OCI-LY7 (cell line): ENCODE measurements at regions of chr14 and their contacts with region 1.

Region 1: GRCh38 chr14:49828640-49829039 is 23.9 kb downstream of the NEMF start:
- DNase-seq: no peak
- H3K4me3 ChIP-seq: no peak overlapping the region
- H3K27ac ChIP-seq: no peak overlapping the region
- H3K4me1 ChIP-seq: no peaks in the 10 kb centered on the region
- CTCF ChIP-seq: no peak

Region 2: GRCh38 chr14:49783394-49784010 is 45.1 kb before region 1 on chr14:
- CTCF ChIA-PET with region 1: no interaction called
- POLR2A ChIA-PET with region 1: no interaction called
- intact Hi-C with region 1: loop called (anchors 5 kb)
- DNase-seq: no peak
- H3K4me3 ChIP-seq: no peak overlapping the region
- H3K27ac ChIP-seq: no peak overlapping the region
- H3K4me1 ChIP-seq: no peaks in the 10 kb centered on the region
- CTCF ChIP-seq: no peak